Ascending aorta (tissue), 2 donors: ENCODE measurements at regions of chr9 and their contacts with region 1.

Region 1: DNA sequence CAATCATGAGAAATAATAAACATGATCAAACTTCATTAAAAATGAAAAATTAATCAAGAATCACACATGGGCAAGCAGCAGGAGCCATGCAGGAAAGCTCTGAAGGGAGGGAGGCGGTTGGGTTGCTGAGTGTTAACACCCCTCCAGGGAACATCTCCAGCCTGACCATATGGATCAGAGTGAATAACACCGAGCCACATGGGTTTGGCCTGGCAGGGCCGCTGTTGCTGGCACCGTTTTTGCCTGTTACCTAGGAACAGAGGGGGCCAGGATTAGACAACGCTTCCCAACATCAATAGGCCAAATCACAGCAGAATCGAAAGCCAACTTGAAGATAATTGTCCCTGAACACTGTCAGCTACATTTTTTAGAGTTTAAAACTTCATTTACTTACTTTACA is 160.2 kb downstream of the DENND1A start:
- DNase-seq: no peak
- H3K4me3 ChIP-seq: no peak overlapping the region
- H3K27ac ChIP-seq: no peak overlapping the region
- H3K4me1 ChIP-seq: no peaks in the 10 kb centered on the region
- H3K27me3 ChIP-seq: no peaks in the 10 kb centered on the region
- CTCF ChIP-seq: no peak

Region 2: GRCh38 chr9:123710299-123710698 is 59.4 kb before region 1 on chr9:
- intact Hi-C with region 1: loop called (anchors 10 kb)
- DNase-seq: no peak
- H3K4me3 ChIP-seq: no peak overlapping the region
- H3K27ac ChIP-seq: no peak overlapping the region
- H3K4me1 ChIP-seq: no peaks in the 10 kb centered on the region
- H3K27me3 ChIP-seq: no peaks in the 10 kb centered on the region
- CTCF ChIP-seq: no peak